PC-9 (cell line): ENCODE measurements at regions of chr3 and their contacts with region 1.

Region 1: DNA sequence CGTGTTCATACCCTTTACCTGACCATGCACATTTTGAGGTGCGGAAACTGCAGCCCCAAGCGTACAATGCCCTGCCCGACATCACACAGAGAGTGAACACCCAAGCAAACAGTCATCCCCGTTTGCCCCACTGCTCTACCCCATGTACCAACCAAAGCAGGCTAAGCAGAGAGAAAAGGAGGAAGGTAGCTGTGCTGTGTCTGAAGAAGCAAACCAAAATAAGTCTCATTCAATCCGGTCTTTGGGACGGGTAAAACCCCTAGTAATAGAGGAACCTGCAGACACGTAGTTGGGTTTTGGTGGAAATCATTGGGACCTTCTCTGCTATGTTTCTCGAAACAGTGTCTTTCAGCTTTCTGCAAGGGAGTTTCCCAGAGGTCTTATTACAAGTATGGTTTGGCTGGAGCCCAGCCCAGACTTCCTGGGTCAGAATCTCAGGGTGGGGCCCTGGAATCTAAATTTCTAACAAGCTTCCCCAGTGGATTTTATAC is 164.6 kb upstream of the HES1 start:
- DNase-seq: peak; percentile 72 to 81
- H3K4me3 ChIP-seq: no peak overlapping the region
- H3K27ac ChIP-seq: no peak overlapping the region
- H3K4me1 ChIP-seq: peaks cover 48% of the 10 kb centered on the region
- H3K27me3 ChIP-seq: no peaks in the 10 kb centered on the region
- CTCF ChIP-seq: no peak

Region 2: DNA sequence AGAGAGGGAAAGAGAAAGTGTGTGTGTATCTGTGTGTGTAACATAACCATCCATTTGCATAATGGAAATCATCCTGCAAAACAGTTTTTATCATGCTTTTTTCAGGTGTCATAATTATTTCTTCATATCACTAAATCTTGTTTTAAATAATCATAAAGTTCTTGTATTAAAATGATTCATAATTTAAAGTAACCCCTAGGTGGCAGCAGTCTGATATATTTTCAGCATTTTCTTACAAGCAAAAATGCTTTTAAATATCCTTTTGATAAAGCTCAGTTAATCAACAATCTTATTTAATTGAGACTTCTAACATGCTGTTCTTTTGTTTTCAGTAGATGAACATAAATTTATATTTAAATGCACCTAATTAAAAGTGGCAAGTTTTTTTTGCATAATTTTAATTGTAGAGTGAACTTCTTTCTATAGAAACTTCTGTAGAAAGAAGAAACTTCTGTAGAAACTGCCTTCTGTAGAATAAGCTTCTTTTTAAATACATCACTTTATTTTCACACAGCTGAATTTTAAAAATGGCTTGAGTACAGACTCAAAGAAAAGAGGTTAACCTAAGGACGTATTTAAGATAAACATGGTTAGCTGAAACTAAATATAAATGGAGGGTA is 305.8 kb before region 1 on chr3:
- CTCF ChIA-PET with region 1: no interaction called
- POLR2A ChIA-PET with region 1: interaction called, 3 read pairs
- intact Hi-C with region 1: loop called (anchors 10 kb)
- DNase-seq: peak in 1 of 2 experiments; percentile 70
- H3K4me3 ChIP-seq: no peak overlapping the region
- H3K27ac ChIP-seq: no peak overlapping the region
- H3K4me1 ChIP-seq: no peaks in the 10 kb centered on the region
- H3K27me3 ChIP-seq: no peaks in the 10 kb centered on the region
- CTCF ChIP-seq: peak; percentile 93

Region 3: GRCh38 chr3:193788189-193788991 is 182.9 kb before region 1 on chr3:
- CTCF ChIA-PET with region 1: interaction called, 6 read pairs
- POLR2A ChIA-PET with region 1: no interaction called
- intact Hi-C with region 1: loop called (anchors 10 kb)
- DNase-seq: peak in 1 of 2 experiments; percentile 55
- H3K4me3 ChIP-seq: no peak overlapping the region
- H3K27ac ChIP-seq: no peak overlapping the region
- H3K4me1 ChIP-seq: peaks cover 47% of the 10 kb centered on the region
- H3K27me3 ChIP-seq: no peaks in the 10 kb centered on the region
- CTCF ChIP-seq: peak; percentile 43; the same call in 1 of the 2 replicates

Region 4: GRCh38 chr3:193910886-193911738 is 60.2 kb before region 1 on chr3:
- CTCF ChIA-PET with region 1: no interaction called
- POLR2A ChIA-PET with region 1: no interaction called
- intact Hi-C with region 1: loop called (anchors 2 kb)
- DNase-seq: peak; percentile 63 to 94
- H3K4me3 ChIP-seq: no peak overlapping the region
- H3K27ac ChIP-seq: peak overlapping the region; percentile 69
- H3K4me1 ChIP-seq: peaks cover 26% of the 10 kb centered on the region
- H3K27me3 ChIP-seq: no peaks in the 10 kb centered on the region
- CTCF ChIP-seq: no peak

Region 5: DNA sequence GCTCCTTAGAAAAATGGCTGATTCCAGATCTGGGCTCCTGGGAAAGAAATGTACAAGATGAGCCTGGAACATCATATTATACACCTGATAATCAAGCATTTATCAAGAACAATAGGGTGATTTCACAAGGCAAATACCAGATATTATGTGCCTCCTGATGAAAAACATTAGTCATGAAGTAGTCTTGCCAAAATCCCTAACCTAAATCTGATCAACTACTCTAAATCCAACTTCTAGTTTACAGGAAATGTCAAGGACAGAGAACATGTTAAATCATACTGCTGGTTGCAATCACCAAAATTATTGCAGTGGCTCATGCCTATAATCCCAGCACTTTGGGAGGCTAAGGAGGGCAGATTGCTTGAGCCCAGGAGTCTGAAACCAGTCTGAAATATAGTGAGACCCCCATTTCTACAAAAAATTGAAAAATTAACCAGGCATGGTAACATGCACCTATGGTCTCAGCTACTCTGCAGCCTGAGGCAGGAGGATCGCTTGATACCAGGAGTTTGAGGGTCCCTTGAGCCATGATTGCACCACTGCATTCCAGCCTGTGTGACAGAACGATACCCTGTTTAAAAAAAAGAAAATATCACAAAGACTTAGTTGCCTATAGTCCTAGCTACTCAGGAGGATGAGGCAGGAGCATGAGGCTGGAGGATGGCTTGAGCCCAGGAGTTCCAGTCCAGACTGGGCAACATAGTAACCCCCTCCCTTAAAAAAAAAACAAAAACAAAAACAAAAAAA is 550.4 kb after region 1 on chr3:
- CTCF ChIA-PET with region 1: no interaction called
- POLR2A ChIA-PET with region 1: interaction called, 13 read pairs
- intact Hi-C with region 1: no loop called
- DNase-seq: peak in 1 of 2 experiments; percentile 93
- H3K4me3 ChIP-seq: no peak overlapping the region
- H3K27ac ChIP-seq: peak overlapping the region; percentile 59
- H3K4me1 ChIP-seq: peaks cover 65% of the 10 kb centered on the region
- H3K27me3 ChIP-seq: no peaks in the 10 kb centered on the region
- CTCF ChIP-seq: no peak